HAP-1 (cell line): ENCODE measurements at regions of chr2 and their contacts with region 1.

Region 1: GRCh38 chr2:88458633-88459032 is 6.1 kb upstream of the FOXI3 start:
- DNase-seq: no peak
- H3K4me3 ChIP-seq: no peak overlapping the region
- H3K4me1 ChIP-seq: no peaks in the 10 kb centered on the region
- H3K27me3 ChIP-seq: no peaks in the 10 kb centered on the region

Region 2: DNA sequence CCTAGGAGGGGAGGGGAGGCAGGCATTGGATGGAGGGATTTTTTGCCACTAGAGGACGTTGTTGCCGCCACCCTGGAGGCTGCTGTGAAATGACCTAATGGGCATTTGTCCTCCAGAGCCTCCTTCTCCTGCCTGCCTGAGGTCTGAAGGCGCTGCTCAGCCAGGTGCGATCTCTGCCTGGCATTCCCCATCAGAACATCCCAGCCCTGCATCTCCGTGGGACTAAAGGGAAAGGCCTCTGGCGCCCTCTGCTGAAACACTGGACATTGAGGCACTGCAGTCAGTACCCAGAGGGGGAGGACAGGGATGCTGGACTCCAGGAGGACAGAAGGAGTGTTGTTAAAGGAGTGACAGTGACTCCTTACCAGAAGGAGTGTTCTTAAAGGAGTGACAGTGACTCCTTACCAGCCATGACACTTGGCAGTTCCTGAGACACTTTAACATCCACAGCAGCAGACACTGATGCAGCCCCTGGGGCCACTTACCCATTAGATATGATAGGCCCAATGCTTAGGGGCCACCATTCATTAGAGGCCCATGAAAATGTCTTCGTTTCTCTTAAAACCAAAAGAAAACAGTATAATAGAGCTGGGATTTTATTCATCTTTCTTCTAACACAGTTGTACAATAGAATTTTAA is 271.5 kb before region 1 on chr2:
- in situ Hi-C with region 1: loop called (anchors 5 kb)
- DNase-seq: peak; percentile 29 to 76
- H3K4me3 ChIP-seq: no peak overlapping the region
- H3K4me1 ChIP-seq: no peaks in the 10 kb centered on the region
- H3K27me3 ChIP-seq: no peaks in the 10 kb centered on the region